MCF 10A (cell line): ENCODE measurements at regions of chr1 and their contacts with region 1.

Region 1: DNA sequence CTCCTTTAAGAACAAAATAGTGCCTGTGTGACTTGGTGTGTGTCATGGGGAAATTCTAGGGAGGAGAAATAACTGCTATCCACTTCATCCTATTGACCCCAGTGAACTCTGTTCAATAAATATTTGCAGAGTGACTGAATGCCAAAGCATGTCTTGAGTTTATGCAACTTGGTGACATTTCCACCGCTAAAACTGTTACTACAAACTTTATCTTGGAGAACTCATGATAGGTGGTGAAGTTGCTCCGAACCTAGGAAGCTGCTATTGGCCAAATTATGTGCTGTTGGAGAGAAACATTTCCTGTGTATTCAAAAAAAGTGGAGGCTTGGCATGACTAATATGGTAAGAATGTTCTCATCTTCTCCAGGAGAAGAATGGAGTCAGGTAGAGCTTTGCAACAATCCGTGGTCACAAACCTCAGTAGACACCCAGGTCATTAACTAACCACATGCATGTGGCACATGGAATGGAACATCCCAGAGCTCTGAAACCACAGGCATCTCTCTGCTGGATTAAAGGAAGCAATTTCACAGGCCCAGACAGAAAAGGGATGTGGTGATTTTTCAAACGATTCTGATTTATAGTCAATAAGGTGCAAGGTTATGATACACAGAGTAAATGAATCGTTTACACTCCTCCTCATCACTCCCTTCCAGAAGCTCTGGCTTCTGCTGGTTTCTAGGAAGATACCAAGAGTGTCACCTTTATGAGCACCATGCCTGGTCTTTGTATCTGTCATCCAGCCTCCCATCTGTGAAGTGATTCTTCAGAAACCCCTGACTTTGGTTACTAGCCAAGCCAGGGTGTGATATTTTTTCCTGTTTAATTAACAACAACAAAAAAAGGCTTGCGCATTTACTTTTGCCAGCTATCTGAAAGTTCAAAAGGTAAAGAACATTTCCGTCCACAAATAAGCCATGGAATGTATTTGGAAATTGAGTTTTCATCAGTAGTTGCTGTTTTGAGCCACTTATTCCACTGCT is 361.1 kb downstream of the TGFB2 start:
- DNase-seq: peak; percentile 98
- H3K4me3 Mint-ChIP-seq: peak overlapping the region; percentile 24
- H3K27ac Mint-ChIP-seq: peak overlapping the region; percentile 46
- H3K4me1 Mint-ChIP-seq: peaks cover 59% of the 10 kb centered on the region
- H3K27me3 Mint-ChIP-seq: no peaks in the 10 kb centered on the region
- CTCF ChIP-seq: no peak

Region 2: DNA sequence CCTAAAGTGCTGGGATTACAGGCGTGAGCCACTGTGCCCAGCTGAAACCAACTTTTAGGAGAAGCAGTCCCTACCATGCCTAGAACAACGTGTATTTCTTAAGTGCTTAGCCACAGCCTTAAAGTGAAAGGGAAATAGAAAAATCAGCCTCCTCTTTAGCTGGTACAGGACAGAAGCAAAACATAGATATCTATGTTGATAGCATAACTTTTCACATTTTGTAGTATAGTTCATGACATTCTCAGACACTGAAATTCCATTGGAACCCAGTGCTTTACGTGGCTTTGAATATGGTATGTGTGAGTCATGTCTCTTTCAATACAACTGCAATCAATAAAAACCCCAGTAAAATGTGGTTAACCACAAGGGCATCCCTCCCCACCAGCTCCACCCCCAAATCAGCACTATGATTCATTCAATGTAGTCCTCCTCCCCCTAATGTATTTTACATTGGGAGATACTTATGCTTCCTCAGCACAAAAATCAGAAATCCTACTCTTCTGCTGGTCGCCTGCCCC is 329.0 kb before region 1 on chr1:
- CTCF ChIA-PET with region 1: no interaction called
- POLR2A ChIA-PET with region 1: interaction called, 5 read pairs
- intact Hi-C with region 1: loop called (anchors 1 kb)
- DNase-seq: peak; percentile 99
- H3K4me3 Mint-ChIP-seq: peak overlapping the region; percentile 39
- H3K27ac Mint-ChIP-seq: peak overlapping the region; percentile 88
- H3K4me1 Mint-ChIP-seq: peaks cover 74% of the 10 kb centered on the region
- H3K27me3 Mint-ChIP-seq: no peaks in the 10 kb centered on the region
- CTCF ChIP-seq: no peak

Region 3: DNA sequence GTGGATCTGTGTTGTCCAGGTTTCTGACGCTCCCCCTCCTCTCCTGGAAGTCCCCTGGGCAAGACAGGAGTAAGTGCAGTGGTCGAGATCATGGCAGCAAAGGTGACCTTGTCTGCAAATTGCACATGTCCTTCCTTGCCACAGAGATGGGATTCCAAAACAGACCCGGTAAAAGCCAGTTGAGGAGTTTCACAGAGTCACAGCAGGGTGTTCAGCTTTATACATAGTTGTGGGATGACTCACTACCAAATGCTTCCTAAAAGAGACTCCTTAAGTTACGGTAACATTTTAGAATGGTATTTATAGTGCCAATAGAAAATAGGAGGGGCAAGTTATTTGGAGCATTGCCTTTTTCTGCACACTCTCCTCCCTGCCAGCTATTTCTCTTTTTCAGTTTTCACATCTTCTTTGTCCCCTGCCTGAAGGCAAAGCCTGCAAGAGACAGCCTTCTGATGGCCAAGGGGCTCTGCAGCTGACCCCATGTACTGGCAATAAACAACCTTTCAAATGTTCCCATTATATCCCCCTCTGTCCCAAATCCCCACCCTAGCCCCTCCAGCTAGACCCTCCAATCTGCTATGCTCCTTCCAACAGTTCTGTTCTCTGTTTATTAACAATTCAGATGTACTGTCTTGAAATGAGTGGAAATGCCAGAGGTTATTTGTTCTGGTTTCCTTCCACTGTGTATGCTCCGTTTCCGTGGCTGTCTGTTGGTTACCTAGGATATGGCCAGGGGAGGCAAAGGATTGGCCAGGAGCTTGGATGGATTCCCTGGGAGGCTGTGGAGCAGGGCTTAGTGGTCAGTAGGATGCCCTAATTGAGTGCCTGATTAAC is 246.1 kb before region 1 on chr1:
- CTCF ChIA-PET with region 1: no interaction called
- POLR2A ChIA-PET with region 1: no interaction called
- intact Hi-C with region 1: loop called (anchors 5 kb)
- DNase-seq: peak; percentile 99
- H3K4me3 Mint-ChIP-seq: peak overlapping the region; percentile 34
- H3K27ac Mint-ChIP-seq: peak overlapping the region; percentile 85
- H3K4me1 Mint-ChIP-seq: peaks cover 38% of the 10 kb centered on the region
- H3K27me3 Mint-ChIP-seq: no peaks in the 10 kb centered on the region
- CTCF ChIP-seq: no peak

Region 4: GRCh38 chr1:218537122-218537904 is 168.9 kb before region 1 on chr1:
- CTCF ChIA-PET with region 1: no interaction called
- POLR2A ChIA-PET with region 1: interaction called, 4 read pairs
- intact Hi-C with region 1: loop called (anchors 5 kb)
- DNase-seq: peak; percentile 74
- H3K4me3 Mint-ChIP-seq: peak overlapping the region; percentile 5
- H3K27ac Mint-ChIP-seq: peak overlapping the region; percentile 98
- H3K4me1 Mint-ChIP-seq: peaks cover 36% of the 10 kb centered on the region
- H3K27me3 Mint-ChIP-seq: no peaks in the 10 kb centered on the region
- CTCF ChIP-seq: no peak

Region 5: GRCh38 chr1:218573925-218574324 is 132.3 kb before region 1 on chr1:
- CTCF ChIA-PET with region 1: no interaction called
- POLR2A ChIA-PET with region 1: no interaction called
- intact Hi-C with region 1: no loop called
- DNase-seq: no peak
- H3K4me3 Mint-ChIP-seq: no peak overlapping the region
- H3K27ac Mint-ChIP-seq: no peak overlapping the region
- H3K4me1 Mint-ChIP-seq: peaks cover 6% of the 10 kb centered on the region
- H3K27me3 Mint-ChIP-seq: no peaks in the 10 kb centered on the region
- CTCF ChIP-seq: no peak

Region 6: GRCh38 chr1:218585511-218586184 is 120.6 kb before region 1 on chr1:
- CTCF ChIA-PET with region 1: no interaction called
- POLR2A ChIA-PET with region 1: no interaction called
- intact Hi-C with region 1: loop called (anchors 5 kb)
- DNase-seq: peak; percentile 95
- H3K4me3 Mint-ChIP-seq: no peak overlapping the region
- H3K27ac Mint-ChIP-seq: peak overlapping the region; percentile 81
- H3K4me1 Mint-ChIP-seq: peaks cover 26% of the 10 kb centered on the region
- H3K27me3 Mint-ChIP-seq: no peaks in the 10 kb centered on the region
- CTCF ChIP-seq: no peak

Region 7: GRCh38 chr1:218665221-218665620 is 41.0 kb before region 1 on chr1:
- CTCF ChIA-PET with region 1: no interaction called
- POLR2A ChIA-PET with region 1: interaction called, 5 read pairs
- intact Hi-C with region 1: loop called (anchors 2 kb)
- DNase-seq: peak; percentile 76
- H3K4me3 Mint-ChIP-seq: peak overlapping the region; percentile 61
- H3K27ac Mint-ChIP-seq: peak overlapping the region; percentile 91
- H3K4me1 Mint-ChIP-seq: peaks cover 36% of the 10 kb centered on the region
- H3K27me3 Mint-ChIP-seq: no peaks in the 10 kb centered on the region
- CTCF ChIP-seq: no peak